Activated CD4-positive, alpha-beta T cell treated with anti-CD3 and anti-CD28 coated beads for 36 hours (primary cell): ENCODE measurements at regions of chr6 and their contacts with region 1.

Region 1: GRCh38 chr6:105880030-105880492 is 206.1 kb upstream of the PRDM1 start:
- DNase-seq: peak; percentile 71
- ATAC-seq: peak; percentile 91
- H3K4me3 Mint-ChIP-seq: peak overlapping the region; percentile 3
- H3K27ac Mint-ChIP-seq: no peak overlapping the region
- H3K4me1 Mint-ChIP-seq: peaks cover 15% of the 10 kb centered on the region
- H3K27me3 Mint-ChIP-seq: peaks cover 27% of the 10 kb centered on the region

Region 2: DNA sequence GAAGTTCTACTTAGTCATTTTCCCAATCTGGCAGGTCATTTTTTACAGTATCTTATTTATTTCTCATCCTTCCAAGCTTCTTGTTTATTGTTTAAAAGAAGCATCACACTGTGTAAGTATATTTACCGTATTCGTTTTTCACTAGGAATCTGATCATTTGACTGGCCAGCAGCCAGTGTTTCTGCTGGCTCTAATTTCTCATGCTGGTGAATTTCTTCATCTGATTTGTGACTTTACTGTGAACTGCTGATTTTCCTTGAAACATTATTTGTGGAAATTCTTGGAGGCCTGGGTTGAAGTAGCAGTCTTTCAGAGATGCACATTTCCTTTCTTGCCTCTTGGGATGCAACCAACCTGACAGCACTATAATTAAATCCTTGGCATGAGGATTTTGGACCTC is 543.1 kb before region 1 on chr6:
- CTCF ChIA-PET with region 1: no interaction called
- POLR2A ChIA-PET with region 1: no interaction called
- intact Hi-C with region 1: no loop called
- DNase-seq: no peak
- ATAC-seq: no peak
- H3K4me3 Mint-ChIP-seq: no peak overlapping the region
- H3K27ac Mint-ChIP-seq: no peak overlapping the region
- H3K4me1 Mint-ChIP-seq: peaks cover 6% of the 10 kb centered on the region
- H3K27me3 Mint-ChIP-seq: no peaks in the 10 kb centered on the region

Region 3: DNA sequence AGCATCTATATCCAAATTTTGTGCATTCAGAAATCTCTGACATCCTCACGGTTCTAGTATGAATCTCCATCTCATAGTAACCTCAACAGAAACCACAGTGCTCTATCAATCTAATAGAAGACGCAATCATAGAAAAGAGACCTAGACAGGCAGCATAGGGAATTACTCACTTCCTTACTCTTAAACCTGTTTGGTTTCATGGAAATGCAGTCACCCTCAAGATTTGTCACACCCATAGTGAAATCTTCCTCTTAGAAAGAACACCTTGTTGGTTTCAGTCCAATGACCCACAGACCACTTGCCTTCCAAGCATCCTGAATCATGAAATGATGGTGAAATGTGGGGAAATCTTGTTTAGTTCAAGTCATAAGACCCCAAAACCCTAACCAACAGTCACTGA is 40.0 kb after region 1 on chr6:
- CTCF ChIA-PET with region 1: no interaction called
- POLR2A ChIA-PET with region 1: no interaction called
- intact Hi-C with region 1: loop called in 1 of 2 experiments (anchors 2 kb)
- DNase-seq: peak; percentile 29
- ATAC-seq: peak; percentile 88
- H3K4me3 Mint-ChIP-seq: no peak overlapping the region
- H3K27ac Mint-ChIP-seq: peak overlapping the region; percentile 26
- H3K4me1 Mint-ChIP-seq: peaks cover 10% of the 10 kb centered on the region
- H3K27me3 Mint-ChIP-seq: peaks cover 11% of the 10 kb centered on the region